Common myeloid progenitor, CD34-positive (primary cell): ENCODE measurements at regions of chr3 and their contacts with region 1.

Region 1: DNA sequence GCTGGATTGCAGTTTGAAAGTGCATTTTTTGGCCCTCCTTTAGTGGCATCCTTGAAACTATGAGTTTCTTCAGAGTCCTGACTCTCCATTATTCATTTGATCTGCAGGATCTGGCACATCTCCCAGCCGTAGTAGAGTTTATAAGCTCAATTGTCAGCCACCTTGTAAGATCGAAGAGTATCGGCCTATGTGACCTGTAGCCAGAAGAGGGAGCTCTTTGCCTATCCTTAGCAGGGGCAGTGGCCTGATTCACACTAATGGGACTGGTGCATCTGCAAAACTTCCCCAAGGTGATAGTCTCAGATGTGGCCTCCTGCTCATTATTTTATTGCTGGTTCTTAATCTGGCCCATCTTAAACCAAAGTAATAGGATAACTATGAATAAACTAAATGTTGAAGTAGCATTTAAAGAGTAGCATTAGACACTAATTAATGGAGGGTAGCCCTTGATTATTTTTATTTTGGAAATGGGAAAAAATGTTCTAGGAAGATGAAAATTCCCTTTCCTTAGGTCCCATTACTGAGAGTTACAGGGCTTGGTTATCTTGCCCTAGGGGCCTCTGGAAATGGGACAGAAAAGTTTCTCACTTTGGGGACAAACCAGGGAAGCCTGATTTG is 21.2 kb downstream of the GCSAM start:
- DNase-seq: peak; percentile 73 to 86 (median 84)
- H3K4me3 ChIP-seq: no peak overlapping the region
- H3K27ac ChIP-seq: no peak overlapping the region
- H3K4me1 ChIP-seq: peaks cover under 1 to 4% (median 3%) of the 10 kb centered on the region in 4 experiments
- H3K27me3 ChIP-seq: no peaks in the 10 kb centered on the region

Region 2: DNA sequence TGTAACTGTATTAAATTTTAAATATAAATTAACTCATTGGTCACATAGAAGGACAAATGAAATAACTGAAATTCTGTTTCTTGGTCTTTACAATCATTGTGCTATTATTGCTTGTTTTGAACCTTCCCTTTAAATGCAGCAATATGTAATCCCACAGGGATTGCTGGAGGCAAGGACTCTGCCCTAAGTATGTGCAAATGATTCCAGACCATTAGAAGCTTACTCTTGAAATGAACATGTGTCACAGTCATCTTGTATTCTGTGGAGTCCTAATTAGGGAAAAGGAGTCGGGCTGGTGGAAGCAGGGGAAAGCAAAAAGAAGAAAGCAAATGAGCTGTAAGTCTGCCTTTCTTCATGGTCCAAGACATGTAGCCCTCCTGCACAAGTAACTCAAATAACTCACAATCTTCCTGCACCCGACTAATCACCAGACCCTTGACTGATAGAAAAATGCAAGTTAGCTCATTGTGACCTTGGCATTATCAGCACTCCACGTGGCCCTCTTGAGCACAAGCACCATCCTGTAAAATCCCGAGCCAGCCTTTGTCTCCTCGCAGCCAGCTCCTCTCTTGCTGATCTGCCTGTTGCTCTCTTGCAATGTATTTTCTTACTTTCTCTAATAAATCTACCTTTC is 79.7 kb before region 1 on chr3:
- CTCF ChIA-PET with region 1: no interaction called
- POLR2A ChIA-PET with region 1: no interaction called
- DNase-seq: no peak
- H3K4me3 ChIP-seq: no peak overlapping the region
- H3K27ac ChIP-seq: no peak overlapping the region
- H3K4me1 ChIP-seq: no peaks in the 10 kb centered on the region
- H3K27me3 ChIP-seq: no peaks in the 10 kb centered on the region

Region 3: GRCh38 chr3:112136959-112137693 is 25.2 kb after region 1 on chr3:
- CTCF ChIA-PET with region 1: interaction called, 26 read pairs
- POLR2A ChIA-PET with region 1: no interaction called
- DNase-seq: peak; percentile 52 to 76 (median 76)
- H3K4me3 ChIP-seq: no peak overlapping the region
- H3K27ac ChIP-seq: no peak overlapping the region
- H3K4me1 ChIP-seq: peaks cover 13 to 58% (median 40%) of the 10 kb centered on the region in 4 experiments
- H3K27me3 ChIP-seq: no peaks in the 10 kb centered on the region

Region 4: GRCh38 chr3:112327371-112327951 is 215.6 kb after region 1 on chr3:
- CTCF ChIA-PET with region 1: interaction called, 24 read pairs
- POLR2A ChIA-PET with region 1: no interaction called
- DNase-seq: peak; percentile 72 to 88 (median 85)
- H3K4me3 ChIP-seq: no peak overlapping the region
- H3K27ac ChIP-seq: no peak overlapping the region
- H3K4me1 ChIP-seq: peaks cover 0 to 1% (median 0%) of the 10 kb centered on the region in 4 experiments
- H3K27me3 ChIP-seq: no peaks in the 10 kb centered on the region

Region 5: GRCh38 chr3:112519424-112520001 is 407.6 kb after region 1 on chr3:
- CTCF ChIA-PET with region 1: interaction called, 10 read pairs
- POLR2A ChIA-PET with region 1: no interaction called
- DNase-seq: peak; percentile 82 to 89 (median 87)
- H3K4me3 ChIP-seq: no peak overlapping the region
- H3K27ac ChIP-seq: no peak overlapping the region
- H3K4me1 ChIP-seq: peaks cover 4 to 15% (median 5%) of the 10 kb centered on the region in 4 experiments
- H3K27me3 ChIP-seq: no peaks in the 10 kb centered on the region